Vagina (tissue), 2 donors: ENCODE measurements at regions of chr6 and their contacts with region 1.

Region 1: GRCh38 chr6:157607317-157608109 is 215.5 kb upstream of the SNX9 start:
- DNase-seq: no peak
- H3K4me3 ChIP-seq: no peak overlapping the region
- H3K27ac ChIP-seq: no peak overlapping the region
- H3K4me1 ChIP-seq: no peaks in the 10 kb centered on the region
- H3K27me3 ChIP-seq: no peaks in the 10 kb centered on the region
- CTCF ChIP-seq: no peak
- POLR2A ChIP-seq: no peak

Region 2: DNA sequence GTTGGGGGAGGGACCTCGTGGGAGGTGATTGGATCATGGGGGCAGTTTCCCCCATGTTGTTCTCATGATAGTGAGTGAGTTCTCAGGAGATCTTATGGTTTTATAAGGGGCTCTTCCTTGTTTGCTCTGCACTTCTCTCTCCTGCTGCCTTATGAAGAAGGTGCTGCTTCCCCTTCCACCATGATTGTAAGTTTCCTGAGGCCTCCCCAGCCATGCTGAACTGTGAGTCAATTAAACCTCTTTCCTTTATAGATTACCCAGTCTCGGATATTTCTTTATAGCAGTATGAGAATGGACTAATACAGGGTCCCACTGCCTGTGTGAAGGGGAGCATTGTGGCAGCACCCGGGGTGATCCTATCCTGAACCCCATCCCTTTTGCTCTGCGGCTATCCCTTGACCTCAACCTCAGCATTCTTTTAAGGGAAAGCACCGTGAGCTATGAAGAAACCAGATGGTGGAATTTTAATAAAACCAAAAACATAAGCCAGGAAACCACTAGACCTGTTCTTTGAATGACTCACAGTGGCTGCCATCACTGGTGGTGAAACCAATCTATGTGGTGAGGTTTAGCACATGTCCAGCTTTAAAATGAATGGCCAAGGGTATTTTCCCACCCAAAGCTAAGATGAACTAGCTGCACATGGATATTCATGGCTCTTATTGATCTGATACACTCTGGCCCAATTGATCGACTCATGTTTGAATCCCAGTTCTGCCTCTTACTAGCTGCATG is 164.3 kb before region 1 on chr6:
- intact Hi-C with region 1: no loop called
- DNase-seq: no peak
- H3K4me3 ChIP-seq: no peak overlapping the region
- H3K27ac ChIP-seq: no peak overlapping the region
- H3K4me1 ChIP-seq: no peaks in the 10 kb centered on the region
- H3K27me3 ChIP-seq: no peaks in the 10 kb centered on the region
- CTCF ChIP-seq: no peak
- POLR2A ChIP-seq: no peak

Region 3: GRCh38 chr6:157667211-157668008 is 59.9 kb after region 1 on chr6:
- intact Hi-C with region 1: loop called (anchors 10 kb)
- DNase-seq: no peak
- H3K4me3 ChIP-seq: no peak overlapping the region
- H3K27ac ChIP-seq: peak overlapping the region; percentile 65
- H3K4me1 ChIP-seq: peaks cover 24% of the 10 kb centered on the region
- H3K27me3 ChIP-seq: no peaks in the 10 kb centered on the region
- CTCF ChIP-seq: peak; percentile 54 to 74 (median 62)
- POLR2A ChIP-seq: no peak

Region 4: GRCh38 chr6:157867155-157867559 is 259.6 kb after region 1 on chr6:
- intact Hi-C with region 1: no loop called
- DNase-seq: no peak
- H3K4me3 ChIP-seq: no peak overlapping the region
- H3K27ac ChIP-seq: no peak overlapping the region
- H3K4me1 ChIP-seq: peaks cover 37% of the 10 kb centered on the region
- H3K27me3 ChIP-seq: no peaks in the 10 kb centered on the region
- CTCF ChIP-seq: no peak
- POLR2A ChIP-seq: no peak